Breast epithelium (tissue), 4 donors: ENCODE measurements at regions of chr2 and their contacts with region 1.

Region 1: GRCh38 chr2:192369969-192370368 is 175.2 kb upstream of the TMEFF2 start:
- DNase-seq: no peak
- H3K4me3 ChIP-seq: no peak overlapping the region
- H3K27ac ChIP-seq: no peak overlapping the region
- H3K4me1 ChIP-seq: no peaks in the 10 kb centered on the region
- H3K27me3 ChIP-seq: no peaks in the 10 kb centered on the region
- CTCF ChIP-seq: no peak
- POLR2A ChIP-seq: no peak

Region 2: GRCh38 chr2:192729369-192729768 is 359.4 kb after region 1 on chr2:
- intact Hi-C with region 1: no loop called
- DNase-seq: no peak
- H3K4me3 ChIP-seq: no peak overlapping the region
- H3K27ac ChIP-seq: no peak overlapping the region
- H3K4me1 ChIP-seq: no peaks in the 10 kb centered on the region
- H3K27me3 ChIP-seq: no peaks in the 10 kb centered on the region
- CTCF ChIP-seq: no peak
- POLR2A ChIP-seq: no peak

Region 3: DNA sequence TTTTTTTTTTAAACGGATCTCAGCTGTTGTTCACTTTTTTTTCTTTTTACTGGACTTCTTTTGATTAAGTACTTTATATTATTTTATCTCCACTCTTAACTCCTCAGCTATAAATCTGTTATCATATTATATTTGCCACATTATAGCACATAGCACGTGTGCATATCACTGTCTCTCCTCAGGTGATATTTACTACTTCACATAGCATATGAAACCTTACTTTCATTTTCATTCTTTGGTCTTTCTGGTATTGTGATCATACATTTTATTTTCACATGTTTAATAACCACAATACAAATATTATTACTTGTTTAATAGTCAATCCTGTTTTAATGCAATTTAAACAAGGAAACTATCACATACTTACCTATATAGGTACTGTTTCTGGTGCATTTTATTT is 817.8 kb after region 1 on chr2:
- intact Hi-C with region 1: loop called (anchors 5 kb)
- DNase-seq: no peak
- H3K4me3 ChIP-seq: peak overlapping the region in 2 of 3 donors; percentile 3 to 6
- H3K27ac ChIP-seq: no peak overlapping the region
- H3K4me1 ChIP-seq: no peaks in the 10 kb centered on the region
- H3K27me3 ChIP-seq: no peaks in the 10 kb centered on the region
- CTCF ChIP-seq: no peak
- POLR2A ChIP-seq: no peak